Prostate gland (tissue), 2 donors: ENCODE measurements at regions of chr7 and their contacts with region 1.

Region 1: DNA sequence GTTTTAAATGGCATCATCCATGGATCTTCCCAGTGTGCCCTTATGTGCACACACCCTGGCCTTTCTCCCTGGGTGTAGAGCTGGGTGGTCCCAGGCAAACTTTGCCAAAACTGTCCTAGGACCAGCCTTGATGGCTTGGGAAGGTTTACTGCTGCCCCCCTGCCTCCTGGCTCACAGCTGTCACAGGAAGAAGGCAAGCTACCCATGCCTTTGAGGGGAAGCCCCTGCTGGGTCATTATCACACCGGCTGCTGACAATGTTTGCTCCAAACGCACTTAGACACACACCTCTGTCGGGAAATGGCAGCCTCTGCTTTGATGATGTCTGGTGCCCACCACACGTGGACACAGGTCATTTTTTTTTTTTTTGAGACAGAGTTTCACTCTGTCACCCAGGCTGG is 25.2 kb upstream of the FIGNL1 start:
- DNase-seq: no peak
- H3K4me3 ChIP-seq: no peak overlapping the region
- H3K27ac ChIP-seq: no peak overlapping the region
- H3K4me1 ChIP-seq: no peaks in the 10 kb centered on the region
- H3K27me3 ChIP-seq: no peaks in the 10 kb centered on the region
- CTCF ChIP-seq: no peak
- POLR2A ChIP-seq: no peak

Region 2: DNA sequence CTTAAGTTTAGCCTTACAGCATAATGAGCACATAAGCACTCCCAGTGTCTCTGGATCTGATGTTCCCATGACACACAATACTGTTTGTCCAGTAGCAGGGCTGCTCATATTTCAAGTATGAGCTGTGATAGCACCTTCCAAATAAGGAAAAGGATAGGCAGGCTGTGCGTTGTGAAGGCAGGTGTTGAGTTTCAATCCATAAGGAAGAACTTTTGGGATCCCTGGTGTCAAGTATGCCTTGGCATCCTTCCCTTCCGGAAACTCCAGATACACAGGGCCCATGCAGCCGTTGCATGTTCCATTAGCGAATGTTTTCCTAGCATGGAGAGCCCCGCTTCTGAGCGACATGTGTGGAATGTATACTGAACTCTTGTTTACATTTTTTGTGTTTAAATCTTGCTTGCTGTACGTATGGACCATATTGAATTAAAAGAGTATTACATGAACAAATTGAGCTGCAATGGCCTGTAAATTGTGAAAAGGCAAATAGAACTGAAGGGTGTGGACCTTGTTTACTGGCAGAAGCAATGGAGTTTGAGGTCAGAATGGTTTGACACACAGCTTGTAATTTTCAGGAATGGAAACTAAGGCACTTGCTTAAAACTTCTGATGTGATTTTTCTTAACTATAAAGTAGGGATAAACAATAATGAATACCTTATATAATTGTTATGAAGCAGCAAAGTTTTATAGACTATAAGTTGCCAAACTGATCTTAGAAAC is 875.0 kb after region 1 on chr7:
- intact Hi-C with region 1: loop called (anchors 10 kb)
- DNase-seq: peak; percentile 75
- H3K4me3 ChIP-seq: no peak overlapping the region
- H3K27ac ChIP-seq: peak overlapping the region; percentile 75 to 77
- H3K4me1 ChIP-seq: peaks cover 5% of the 10 kb centered on the region
- H3K27me3 ChIP-seq: no peaks in the 10 kb centered on the region
- CTCF ChIP-seq: no peak
- POLR2A ChIP-seq: no peak